ENCODE measurements at regions of chr15 and their contacts with region 1.

Region 1: DNA sequence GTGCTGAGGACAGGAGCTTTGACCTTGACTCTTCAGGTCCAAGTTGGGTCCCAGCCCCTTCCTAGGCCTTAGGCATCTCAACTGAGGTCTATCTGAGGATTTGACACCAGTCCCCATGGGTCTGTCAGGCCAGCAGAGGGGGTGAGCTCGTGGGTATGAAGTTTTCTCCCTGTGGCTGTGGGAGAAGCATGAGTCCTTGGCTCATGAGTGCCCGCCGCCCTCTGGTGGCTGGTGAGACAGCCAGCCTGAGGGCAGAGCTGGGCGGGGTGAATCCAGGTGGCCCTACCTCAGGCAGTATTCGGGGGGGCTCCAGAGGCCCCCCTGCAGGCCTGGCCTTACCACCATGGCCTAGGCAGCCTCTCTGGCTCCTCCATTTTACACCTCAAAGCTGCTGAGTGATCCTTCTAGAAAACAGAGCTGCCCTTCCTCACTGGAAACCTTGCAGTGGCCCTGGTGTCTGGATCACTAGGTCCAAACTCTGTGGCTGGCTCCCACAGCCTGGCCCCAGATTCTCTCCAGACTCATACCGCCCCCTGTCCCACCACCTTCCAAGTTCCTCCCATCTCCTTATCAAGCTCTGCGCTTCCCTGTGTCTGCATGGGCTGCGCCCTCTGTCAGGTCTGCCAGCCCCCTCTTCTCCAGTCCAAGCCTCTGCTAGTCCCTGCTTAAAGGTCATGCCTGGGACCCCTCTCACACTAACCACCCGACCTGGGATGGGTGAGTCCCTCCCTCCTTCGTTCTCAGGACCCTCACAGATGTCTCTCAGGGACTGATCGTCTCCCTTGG is 16.1 kb downstream of the SH2D7 start:
- DNase-seq: peak; percentile 81
- ATAC-seq: peak; percentile 89
- H3K4me3 Mint-ChIP-seq: no peak overlapping the region
- H3K27ac Mint-ChIP-seq: no peak overlapping the region
- H3K4me1 Mint-ChIP-seq: peaks cover 3% of the 10 kb centered on the region; the same call in 1 of the 2 replicates
- H3K27me3 Mint-ChIP-seq: no peaks in the 10 kb centered on the region
- CTCF ChIP-seq: peak; percentile 61

Region 2: GRCh38 chr15:77907824-77908751 is 200.4 kb before region 1 on chr15:
- CTCF ChIA-PET with region 1: interaction called, 10 read pairs
- POLR2A ChIA-PET with region 1: no interaction called
- DNase-seq: peak; percentile 85
- ATAC-seq: peak; percentile 88
- H3K4me3 Mint-ChIP-seq: no peak overlapping the region
- H3K27ac Mint-ChIP-seq: no peak overlapping the region
- H3K4me1 Mint-ChIP-seq: peaks cover 17% of the 10 kb centered on the region
- H3K27me3 Mint-ChIP-seq: peaks cover 3% of the 10 kb centered on the region; the same call in 1 of the 2 replicates
- CTCF ChIP-seq: 0 out of 2 replicates have a peak, but pooled peaks have one; percentile 36

Region 3: GRCh38 chr15:78000091-78000926 is 108.2 kb before region 1 on chr15:
- CTCF ChIA-PET with region 1: interaction called, 91 read pairs
- POLR2A ChIA-PET with region 1: interaction called, 3 read pairs
- DNase-seq: peak; percentile 97
- ATAC-seq: peak; percentile 99
- H3K4me3 Mint-ChIP-seq: no peak overlapping the region
- H3K27ac Mint-ChIP-seq: no peak overlapping the region; the same call in 1 of the 2 replicates
- H3K4me1 Mint-ChIP-seq: peaks cover 16% of the 10 kb centered on the region
- H3K27me3 Mint-ChIP-seq: no peaks in the 10 kb centered on the region
- CTCF ChIP-seq: peak; percentile 57

Region 4: DNA sequence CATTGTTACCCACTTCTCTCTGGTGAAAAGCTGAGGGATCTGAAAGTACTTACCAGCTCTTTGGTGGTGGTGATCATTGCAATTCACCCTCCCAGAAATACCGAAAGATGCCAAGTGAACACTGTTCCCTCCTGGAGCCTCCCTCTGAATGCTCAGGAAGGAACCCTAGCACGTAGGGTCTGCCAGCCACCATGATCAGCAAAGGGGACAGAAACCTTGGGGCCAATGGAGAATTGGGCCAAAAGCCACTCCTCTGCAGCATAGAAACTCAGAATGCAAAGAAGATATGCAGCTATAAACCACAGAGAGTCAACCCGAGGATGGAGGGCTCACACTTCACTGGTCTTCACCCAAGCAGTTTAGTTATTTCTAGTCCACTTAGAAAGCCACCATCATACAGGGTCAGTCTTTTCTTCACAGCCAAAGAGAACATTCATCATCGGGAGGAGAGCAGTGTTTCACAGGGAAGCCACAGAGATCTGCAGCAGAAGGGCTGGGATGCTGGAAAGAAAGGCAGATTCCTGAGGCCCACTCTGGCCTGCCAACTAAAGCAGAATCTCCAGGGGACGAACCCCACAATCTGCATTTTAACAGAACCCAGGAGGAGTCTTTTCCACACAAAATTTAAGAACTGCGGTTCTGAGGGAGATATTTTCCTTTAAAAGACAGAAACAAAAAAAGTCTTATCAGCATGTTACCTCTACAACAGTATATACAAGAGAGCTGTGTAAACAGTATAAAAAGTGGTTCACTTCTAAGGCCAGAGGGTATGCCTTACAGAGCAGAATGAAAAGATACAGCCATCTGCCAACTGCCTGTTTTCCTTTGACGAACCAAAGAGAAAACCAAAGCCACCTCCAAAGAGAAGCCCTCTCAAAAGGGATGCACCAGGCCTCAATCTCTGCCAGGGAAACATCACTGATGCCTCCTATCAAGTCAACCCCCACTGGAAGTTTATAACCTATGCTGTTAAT is 42.2 kb before region 1 on chr15:
- CTCF ChIA-PET with region 1: interaction called, 10 read pairs
- POLR2A ChIA-PET with region 1: no interaction called
- DNase-seq: peak; percentile 6
- ATAC-seq: no peak; the same call in 1 of the 2 replicates
- H3K4me3 Mint-ChIP-seq: no peak overlapping the region
- H3K27ac Mint-ChIP-seq: peak overlapping the region; percentile 52; the same call in 1 of the 2 replicates
- H3K4me1 Mint-ChIP-seq: peaks cover 7% of the 10 kb centered on the region
- H3K27me3 Mint-ChIP-seq: no peaks in the 10 kb centered on the region
- CTCF ChIP-seq: no peak

Region 5: GRCh38 chr15:78093242-78094020 is 15.1 kb before region 1 on chr15:
- CTCF ChIA-PET with region 1: interaction called, 35 read pairs
- POLR2A ChIA-PET with region 1: no interaction called
- DNase-seq: no peak
- ATAC-seq: no peak
- H3K4me3 Mint-ChIP-seq: no peak overlapping the region
- H3K27ac Mint-ChIP-seq: no peak overlapping the region
- H3K4me1 Mint-ChIP-seq: no peaks in the 10 kb centered on the region
- H3K27me3 Mint-ChIP-seq: peaks cover 37% of the 10 kb centered on the region
- CTCF ChIP-seq: no peak

Region 6: DNA sequence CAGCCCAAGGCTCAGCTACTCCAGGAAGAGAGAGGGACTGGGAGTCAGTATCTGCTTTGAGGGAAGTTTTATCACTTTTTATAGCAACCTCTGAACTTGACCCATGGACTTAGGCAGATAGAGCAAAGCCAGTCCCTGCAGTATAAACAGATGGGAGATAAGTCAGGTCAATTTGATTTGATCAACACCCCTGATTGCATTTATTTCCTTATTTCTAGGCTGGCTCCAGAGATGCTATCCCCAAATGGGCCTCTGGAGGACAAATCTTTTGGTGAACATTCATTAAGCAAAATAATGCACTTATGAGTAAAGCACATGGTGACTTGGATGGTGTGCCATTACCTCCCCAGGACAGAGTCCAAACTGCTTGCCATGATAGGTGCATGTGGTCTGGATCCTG is 31.8 kb after region 1 on chr15:
- CTCF ChIA-PET with region 1: interaction called, 11 read pairs
- POLR2A ChIA-PET with region 1: no interaction called
- DNase-seq: no peak
- ATAC-seq: no peak
- H3K4me3 Mint-ChIP-seq: no peak overlapping the region
- H3K27ac Mint-ChIP-seq: no peak overlapping the region
- H3K4me1 Mint-ChIP-seq: peaks cover 3% of the 10 kb centered on the region
- H3K27me3 Mint-ChIP-seq: peaks cover 7% of the 10 kb centered on the region
- CTCF ChIP-seq: no peak

Region 7: GRCh38 chr15:78195735-78196201 is 87.3 kb after region 1 on chr15:
- CTCF ChIA-PET with region 1: interaction called, 45 read pairs
- POLR2A ChIA-PET with region 1: no interaction called
- DNase-seq: peak; percentile 52
- ATAC-seq: peak; percentile 95
- H3K4me3 Mint-ChIP-seq: no peak overlapping the region
- H3K27ac Mint-ChIP-seq: no peak overlapping the region
- H3K4me1 Mint-ChIP-seq: no peaks in the 10 kb centered on the region
- H3K27me3 Mint-ChIP-seq: no peaks in the 10 kb centered on the region
- CTCF ChIP-seq: peak; percentile 60